WTC11 (cell line): ENCODE measurements at regions of chr20 and their contacts with region 1.

Region 1: DNA sequence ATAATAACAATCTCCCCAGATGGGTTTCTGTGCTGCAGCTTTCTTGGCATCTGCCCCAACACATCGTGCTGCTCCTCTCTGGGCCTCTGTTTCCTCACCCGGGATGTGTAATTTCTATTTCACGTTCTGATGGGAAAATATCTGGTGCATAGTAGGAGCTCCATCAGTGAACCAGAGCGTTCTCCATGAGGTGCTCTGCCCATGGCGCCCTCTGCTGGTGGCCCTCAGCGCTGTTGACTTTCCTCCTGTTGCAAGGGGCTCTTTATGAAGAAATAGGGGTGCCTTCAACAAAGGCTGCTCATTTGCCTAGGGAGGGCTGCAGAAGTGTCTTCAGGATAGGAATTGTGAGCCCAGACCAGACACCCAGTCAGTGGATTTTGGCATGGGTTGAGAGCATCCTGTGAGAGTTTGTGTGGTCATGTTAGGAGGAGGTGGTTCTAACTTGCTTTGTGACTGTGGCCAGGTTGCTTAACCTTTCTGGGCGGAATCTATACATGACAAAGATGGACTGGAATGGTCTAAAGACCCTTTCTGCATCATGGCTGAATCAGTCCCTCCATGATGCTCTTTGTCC is 8.1 kb downstream of the SCRT2 start:
- DNase-seq: peak; percentile 87
- ATAC-seq: peak; percentile 54
- H3K4me3 Mint-ChIP-seq: no peak overlapping the region
- H3K27ac Mint-ChIP-seq: no peak overlapping the region
- H3K4me1 Mint-ChIP-seq: peaks cover 49% of the 10 kb centered on the region
- H3K27me3 Mint-ChIP-seq: peaks cover 30% of the 10 kb centered on the region
- CTCF ChIP-seq: peak; percentile 84

Region 2: DNA sequence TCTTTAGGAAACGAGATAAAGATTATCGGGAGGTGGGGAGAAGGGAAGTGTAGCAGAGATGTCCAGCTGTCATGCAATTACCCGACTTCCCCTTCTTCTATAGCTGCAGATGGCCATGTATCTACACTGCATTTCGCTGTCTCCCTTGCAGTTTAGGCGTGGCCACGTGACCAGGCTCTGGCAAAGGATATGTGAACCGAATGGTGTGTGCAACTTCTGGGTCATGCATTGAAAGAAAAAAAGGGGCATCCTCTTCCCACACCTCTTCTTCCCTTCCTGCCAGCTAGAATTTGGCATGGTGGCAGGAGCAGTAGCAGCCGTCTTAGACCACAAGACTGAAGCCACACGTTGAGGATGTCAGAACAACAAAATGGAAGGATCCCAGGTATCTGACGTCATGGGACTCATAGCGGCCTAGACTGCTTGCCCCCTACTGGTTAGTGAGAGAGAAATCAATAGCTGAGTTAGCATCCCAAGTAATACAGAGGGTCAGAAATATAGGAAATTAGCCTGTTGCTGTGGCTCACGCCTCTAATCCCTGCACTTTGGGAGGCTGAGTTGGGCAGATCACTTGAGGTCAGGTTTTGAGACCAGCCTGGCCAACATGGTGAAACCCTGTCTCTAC is 90.2 kb before region 1 on chr20:
- CTCF ChIA-PET with region 1: interaction called, 22 read pairs
- POLR2A ChIA-PET with region 1: no interaction called
- DNase-seq: no peak
- ATAC-seq: peak; percentile 43
- H3K4me3 Mint-ChIP-seq: no peak overlapping the region
- H3K27ac Mint-ChIP-seq: no peak overlapping the region; the same call in 1 of the 2 replicates
- H3K4me1 Mint-ChIP-seq: peaks cover 41% of the 10 kb centered on the region
- H3K27me3 Mint-ChIP-seq: peaks cover 6% of the 10 kb centered on the region; the same call in 1 of the 2 replicates
- CTCF ChIP-seq: peak; percentile 26; the same call in 1 of the 2 replicates

Region 3: DNA sequence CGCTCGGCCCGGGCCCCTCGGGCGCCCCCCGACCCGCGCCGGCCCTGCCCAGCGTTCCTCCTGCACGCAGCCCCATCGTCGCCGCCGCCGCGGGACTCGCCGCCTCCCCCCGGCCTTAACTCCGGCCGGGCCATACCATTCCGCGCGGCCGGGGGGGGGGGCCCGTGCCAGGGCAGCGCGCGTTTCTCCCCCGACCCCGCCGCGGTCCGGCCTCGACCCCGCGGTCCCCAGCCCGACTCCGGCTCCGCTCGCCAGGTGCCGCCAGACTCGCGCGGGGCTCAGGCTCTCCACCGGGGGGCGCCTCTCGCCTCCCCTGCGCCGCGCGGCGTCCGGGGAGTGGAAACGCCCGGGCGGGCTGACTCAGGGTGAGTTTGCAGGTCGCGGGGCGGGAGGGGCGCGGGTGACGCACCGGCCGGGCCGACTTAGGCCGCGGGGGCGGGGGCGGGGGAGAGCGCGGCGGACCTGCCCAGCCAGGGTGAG is 14.3 kb before region 1 on chr20 and contains the start of gene SRXN1:
- CTCF ChIA-PET with region 1: interaction called, 136 read pairs
- POLR2A ChIA-PET with region 1: no interaction called
- DNase-seq: peak; percentile 87
- ATAC-seq: peak; percentile 81
- H3K4me3 Mint-ChIP-seq: peak within 1 kb of the TSS; percentile 73
- H3K27ac Mint-ChIP-seq: peak within 1 kb of the TSS; percentile 54; the same call in 1 of the 2 replicates
- H3K4me1 Mint-ChIP-seq: peaks cover 49% of the 10 kb centered on the region
- H3K27me3 Mint-ChIP-seq: peaks cover 6% of the 10 kb centered on the region
- CTCF ChIP-seq: peak; percentile 29; the same call in 1 of the 2 replicates
- total RNA-seq, gene SRXN1: 23.0 to 25.7 TPM (median 24.5 TPM) in 3 replicates

Region 4: GRCh38 chr20:699811-700338 is 32.4 kb after region 1 on chr20:
- CTCF ChIA-PET with region 1: interaction called, 24 read pairs
- POLR2A ChIA-PET with region 1: no interaction called
- DNase-seq: peak; percentile 51
- ATAC-seq: peak; percentile 82
- H3K4me3 Mint-ChIP-seq: no peak overlapping the region
- H3K27ac Mint-ChIP-seq: no peak overlapping the region
- H3K4me1 Mint-ChIP-seq: peaks cover 30% of the 10 kb centered on the region
- H3K27me3 Mint-ChIP-seq: peaks cover 3% of the 10 kb centered on the region; the same call in 1 of the 2 replicates
- CTCF ChIP-seq: no peak

Region 5: GRCh38 chr20:733861-734260 is 66.4 kb after region 1 on chr20:
- CTCF ChIA-PET with region 1: interaction called, 35 read pairs
- POLR2A ChIA-PET with region 1: no interaction called
- DNase-seq: no peak
- ATAC-seq: no peak
- H3K4me3 Mint-ChIP-seq: no peak overlapping the region
- H3K27ac Mint-ChIP-seq: no peak overlapping the region
- H3K4me1 Mint-ChIP-seq: peaks cover 9% of the 10 kb centered on the region
- H3K27me3 Mint-ChIP-seq: peaks cover 12% of the 10 kb centered on the region
- CTCF ChIP-seq: no peak

Region 6: DNA sequence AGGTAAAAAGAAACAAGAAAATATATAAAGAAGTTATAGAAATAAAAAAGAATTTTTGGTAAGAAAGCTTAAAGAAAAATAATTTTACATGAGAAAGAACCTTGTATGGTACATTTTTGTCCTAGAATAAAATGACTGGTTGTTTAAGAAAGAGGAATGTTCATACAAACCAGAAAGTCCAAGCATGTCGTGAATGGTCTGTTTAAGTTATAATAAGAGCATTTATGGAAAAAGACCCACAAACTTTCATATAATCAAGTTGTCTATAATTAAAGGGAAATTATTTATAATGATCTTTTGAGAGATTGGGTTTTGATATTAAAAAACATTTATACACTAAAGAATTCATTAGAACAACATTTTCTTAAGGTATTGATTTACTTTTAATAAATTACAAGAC is 138.2 kb after region 1 on chr20:
- CTCF ChIA-PET with region 1: no interaction called
- POLR2A ChIA-PET with region 1: no interaction called
- DNase-seq: no peak
- ATAC-seq: no peak
- H3K4me3 Mint-ChIP-seq: no peak overlapping the region
- H3K27ac Mint-ChIP-seq: no peak overlapping the region
- H3K4me1 Mint-ChIP-seq: no peaks in the 10 kb centered on the region
- H3K27me3 Mint-ChIP-seq: peaks cover 15% of the 10 kb centered on the region
- CTCF ChIP-seq: no peak